Mammary epithelial cell (primary cell): ENCODE measurements at regions of chr6 and their contacts with region 1.

Region 1: GRCh38 chr6:27893059-27893835 is 18.9 kb downstream of the OR2B2 start:
- DNase-seq: peak; percentile 97
- H3K4me3 ChIP-seq: peak overlapping the region; percentile 66 to 84 (median 74)
- H3K27ac ChIP-seq: peak overlapping the region; percentile 86
- H3K4me1 ChIP-seq: peaks cover 11% of the 10 kb centered on the region
- H3K27me3 ChIP-seq: no peaks in the 10 kb centered on the region
- CTCF ChIP-seq: no peak

Region 2: DNA sequence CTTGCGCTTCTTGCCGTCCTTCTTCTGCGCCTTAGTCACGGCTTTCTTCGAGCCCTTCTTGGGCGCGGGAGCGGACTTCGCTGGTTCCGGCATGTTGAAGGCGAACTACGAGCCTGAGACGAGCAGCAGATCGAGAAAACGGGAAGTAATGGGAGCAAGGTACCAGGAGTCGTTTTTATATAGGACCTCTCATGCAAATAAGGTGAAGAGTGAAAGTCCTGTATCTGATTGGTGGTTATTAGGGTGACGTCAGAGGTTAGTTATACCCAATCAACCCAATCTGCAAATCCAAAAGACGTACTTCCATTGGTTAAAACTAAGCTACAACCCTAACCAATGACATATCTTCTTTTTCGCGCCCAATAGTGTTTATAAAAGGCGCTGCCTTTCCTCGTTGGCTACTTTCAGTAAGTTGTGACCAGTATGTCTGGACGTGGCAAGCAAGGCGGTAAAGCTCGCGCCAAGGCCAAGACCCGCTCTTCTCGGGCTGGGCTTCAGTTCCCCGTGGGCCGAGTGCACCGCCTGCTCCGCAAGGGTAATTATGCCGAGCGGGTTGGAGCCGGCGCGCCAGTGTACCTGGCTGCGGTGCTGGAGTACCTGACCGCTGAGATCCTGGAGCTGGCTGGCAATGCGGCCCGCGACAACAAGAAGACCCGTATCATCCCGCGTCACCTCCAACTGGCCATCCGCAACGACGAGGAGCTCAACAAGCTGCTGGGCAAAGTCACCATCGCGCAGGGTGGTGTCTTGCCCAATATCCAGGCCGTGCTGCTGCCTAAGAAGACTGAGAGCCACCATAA is 746.3 kb before region 1 on chr6:
- CTCF ChIA-PET with region 1: no interaction called
- dilution Hi-C with region 1: loop called (anchors 25 kb)
- in situ Hi-C with region 1: loop called in 1 of 2 experiments (anchors 25 kb)
- intact Hi-C with region 1: loop called (anchors 5 kb)
- DNase-seq: peak; percentile 99
- H3K4me3 ChIP-seq: peak overlapping the region; percentile 44 to 79 (median 73)
- H3K27ac ChIP-seq: peak overlapping the region; percentile 79
- H3K4me1 ChIP-seq: peaks cover 5% of the 10 kb centered on the region
- H3K27me3 ChIP-seq: no peaks in the 10 kb centered on the region
- CTCF ChIP-seq: no peak

Region 3: DNA sequence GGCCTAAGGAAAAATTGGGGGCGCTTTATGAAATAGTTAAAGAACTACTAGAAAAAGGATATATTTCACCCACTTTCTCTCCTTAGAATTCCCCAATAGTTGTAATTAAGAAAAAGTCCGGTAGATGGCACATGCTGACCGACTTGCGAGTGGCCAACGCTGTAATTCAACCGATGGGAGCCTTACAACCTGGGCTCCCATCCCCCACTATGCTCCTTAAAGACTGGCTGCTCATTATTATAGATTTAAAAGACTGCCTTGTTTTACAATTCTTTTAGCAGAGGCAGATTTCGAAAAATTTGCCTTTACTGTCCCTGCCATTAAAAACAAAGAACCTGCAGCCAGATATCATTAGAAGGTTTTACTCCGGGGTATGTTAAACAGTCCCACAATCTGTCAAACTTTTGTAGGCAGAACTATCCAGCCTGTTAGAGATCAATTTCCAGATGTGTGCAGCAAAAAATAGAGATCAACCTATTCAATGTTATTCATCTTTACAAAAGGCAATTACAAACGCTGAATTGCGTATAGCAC is 704.3 kb before region 1 on chr6:
- CTCF ChIA-PET with region 1: no interaction called
- dilution Hi-C with region 1: no loop called
- in situ Hi-C with region 1: loop called in 1 of 2 experiments (anchors 25 kb)
- intact Hi-C with region 1: loop called (anchors 1 kb)
- DNase-seq: peak; percentile 71
- H3K4me3 ChIP-seq: peak overlapping the region; percentile 56 to 74 (median 71)
- H3K27ac ChIP-seq: peak overlapping the region; percentile 44
- H3K4me1 ChIP-seq: no peaks in the 10 kb centered on the region
- H3K27me3 ChIP-seq: no peaks in the 10 kb centered on the region
- CTCF ChIP-seq: peak; percentile 38 to 68

Region 4: DNA sequence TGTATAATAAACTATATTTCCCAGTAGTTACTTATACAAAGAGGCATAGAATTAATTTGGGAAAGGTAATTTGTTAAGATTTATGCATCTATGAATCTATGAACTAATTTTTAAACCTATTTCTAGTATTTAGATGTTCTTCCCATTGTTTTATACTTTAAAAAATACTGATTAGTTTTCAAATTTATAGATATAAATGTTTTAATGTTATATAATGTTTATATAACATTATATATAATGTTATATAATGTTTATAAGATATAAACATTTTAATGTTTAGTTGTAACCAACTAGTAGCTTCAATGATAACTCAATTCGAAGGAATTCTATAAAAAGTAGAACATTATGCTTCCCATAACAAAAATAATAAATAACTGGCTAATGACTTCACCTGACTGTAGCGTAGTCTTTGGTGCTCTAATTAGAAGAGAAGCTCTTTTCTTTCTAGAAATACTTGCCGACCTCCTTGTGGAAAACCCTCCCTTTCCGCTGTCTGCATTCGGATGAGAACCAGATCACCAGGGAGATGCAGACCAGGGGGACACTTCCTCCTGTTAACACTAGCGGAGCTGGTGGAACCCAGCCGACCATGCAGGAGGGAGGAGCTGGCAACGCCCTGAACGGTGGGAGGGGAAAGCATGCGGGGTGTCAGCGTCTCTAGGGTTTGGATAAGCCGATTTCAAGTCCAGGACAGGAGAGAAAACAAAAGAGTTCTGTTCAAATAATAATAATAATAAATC is 139.4 kb before region 1 on chr6:
- CTCF ChIA-PET with region 1: no interaction called
- dilution Hi-C with region 1: no loop called
- in situ Hi-C with region 1: no loop called
- intact Hi-C with region 1: loop called (anchors 2 kb)
- DNase-seq: peak; percentile 81
- H3K4me3 ChIP-seq: peak overlapping the region; percentile 49 to 86 (median 80)
- H3K27ac ChIP-seq: peak overlapping the region; percentile 27
- H3K4me1 ChIP-seq: no peaks in the 10 kb centered on the region
- H3K27me3 ChIP-seq: no peaks in the 10 kb centered on the region
- CTCF ChIP-seq: peak in 1 of 2 donors; percentile 39

Region 5: DNA sequence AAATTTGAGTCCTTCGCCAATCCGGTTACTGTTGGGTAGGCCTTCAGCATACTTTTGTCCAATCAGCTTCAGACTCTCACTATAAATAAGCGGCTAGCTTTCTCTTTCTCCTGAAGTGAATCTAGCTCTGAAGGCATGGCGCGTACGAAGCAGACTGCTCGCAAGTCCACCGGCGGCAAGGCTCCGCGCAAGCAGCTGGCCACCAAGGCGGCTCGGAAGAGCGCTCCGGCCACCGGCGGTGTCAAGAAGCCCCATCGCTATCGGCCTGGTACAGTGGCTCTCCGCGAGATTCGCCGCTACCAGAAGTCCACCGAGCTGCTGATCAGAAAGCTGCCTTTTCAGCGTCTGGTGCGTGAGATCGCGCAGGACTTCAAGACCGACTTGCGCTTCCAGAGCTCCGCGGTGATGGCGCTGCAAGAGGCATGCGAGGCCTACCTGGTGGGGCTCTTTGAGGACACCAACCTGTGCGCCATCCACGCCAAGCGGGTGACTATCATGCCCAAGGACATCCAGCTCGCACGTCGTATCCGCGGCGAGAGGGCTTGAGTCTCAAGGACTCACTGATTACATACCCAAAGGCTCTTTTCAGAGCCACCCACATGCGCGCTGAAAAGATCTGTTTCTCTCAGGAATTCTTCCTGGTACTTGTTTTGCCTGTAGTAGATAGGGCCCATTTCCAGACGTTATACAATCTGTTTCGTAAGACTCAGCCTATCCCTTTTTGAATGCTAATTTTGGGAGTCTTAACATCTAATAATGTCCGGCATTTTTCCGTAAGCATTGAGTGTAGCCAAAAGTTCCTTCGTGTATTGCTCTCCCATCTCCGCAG is 83.1 kb before region 1 on chr6:
- CTCF ChIA-PET with region 1: interaction called, 6 read pairs
- dilution Hi-C with region 1: no loop called
- in situ Hi-C with region 1: loop called (anchors 5 kb)
- intact Hi-C with region 1: loop called (anchors 1 kb)
- DNase-seq: peak; percentile 96
- H3K4me3 ChIP-seq: peak overlapping the region; percentile 58 to 85 (median 60)
- H3K27ac ChIP-seq: peak overlapping the region; percentile 77
- H3K4me1 ChIP-seq: peaks cover 18% of the 10 kb centered on the region
- H3K27me3 ChIP-seq: no peaks in the 10 kb centered on the region
- CTCF ChIP-seq: peak in 1 of 2 donors; percentile 25

Region 6: DNA sequence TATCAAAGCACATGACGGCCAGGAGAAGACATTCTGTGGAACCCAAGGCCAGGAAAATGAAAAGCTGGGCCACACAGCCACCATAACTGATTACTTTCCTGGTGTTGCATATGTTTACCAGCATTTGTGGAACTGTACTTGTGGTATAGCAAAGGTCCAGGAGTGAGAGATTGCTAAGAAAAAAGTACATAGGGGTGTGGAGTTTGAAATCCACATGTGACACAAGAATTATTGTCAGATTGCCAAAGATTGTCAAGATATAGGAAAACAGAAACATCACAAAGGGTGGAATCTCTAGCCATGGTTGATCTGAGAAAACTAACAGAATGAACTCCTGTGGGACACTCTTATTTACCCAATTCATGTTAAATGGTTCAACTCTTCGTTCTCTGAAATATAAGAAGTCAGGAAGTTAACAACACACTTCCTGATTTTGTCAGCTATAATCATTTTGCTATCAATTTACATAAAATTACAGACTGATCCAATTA is 18.8 kb after region 1 on chr6 and contains the start of gene OR2B2:
- CTCF ChIA-PET with region 1: no interaction called
- dilution Hi-C with region 1: no loop called
- in situ Hi-C with region 1: no loop called
- intact Hi-C with region 1: no loop called
- DNase-seq: peak; percentile 0
- H3K4me3 ChIP-seq: no peak within 1 kb of the TSS
- H3K27ac ChIP-seq: no peak within 1 kb of the TSS
- H3K4me1 ChIP-seq: peaks cover 6% of the 10 kb centered on the region
- H3K27me3 ChIP-seq: no peaks in the 10 kb centered on the region
- CTCF ChIP-seq: no peak
- total RNA-seq, gene OR2B2: not detected

Region 7: GRCh38 chr6:28212510-28213212 is 319.4 kb after region 1 on chr6:
- CTCF ChIA-PET with region 1: no interaction called
- dilution Hi-C with region 1: no loop called
- in situ Hi-C with region 1: no loop called
- intact Hi-C with region 1: loop called (anchors 2 kb)
- DNase-seq: peak; percentile 93
- H3K4me3 ChIP-seq: peak overlapping the region; percentile 61 to 62 (median 61)
- H3K27ac ChIP-seq: peak overlapping the region; percentile 77
- H3K4me1 ChIP-seq: peaks cover 19% of the 10 kb centered on the region
- H3K27me3 ChIP-seq: no peaks in the 10 kb centered on the region
- CTCF ChIP-seq: peak; percentile 13 to 28